ENCODE measurements at regions of chr1 and their contacts with region 1.

Region 1: GRCh38 chr1:193338194-193338593 is 151.8 kb upstream of the B3GALT2 start:
- DNase-seq: peak; percentile 65
- ATAC-seq: peak; percentile 90
- H3K4me3 ChIP-seq: no peak overlapping the region
- H3K27ac ChIP-seq: peak overlapping the region; percentile 46
- H3K4me1 ChIP-seq: peaks cover 11% of the 10 kb centered on the region
- H3K27me3 ChIP-seq: no peaks in the 10 kb centered on the region
- CTCF ChIP-seq: peak; percentile 52; the same call in 1 of the 2 replicates

Region 2: DNA sequence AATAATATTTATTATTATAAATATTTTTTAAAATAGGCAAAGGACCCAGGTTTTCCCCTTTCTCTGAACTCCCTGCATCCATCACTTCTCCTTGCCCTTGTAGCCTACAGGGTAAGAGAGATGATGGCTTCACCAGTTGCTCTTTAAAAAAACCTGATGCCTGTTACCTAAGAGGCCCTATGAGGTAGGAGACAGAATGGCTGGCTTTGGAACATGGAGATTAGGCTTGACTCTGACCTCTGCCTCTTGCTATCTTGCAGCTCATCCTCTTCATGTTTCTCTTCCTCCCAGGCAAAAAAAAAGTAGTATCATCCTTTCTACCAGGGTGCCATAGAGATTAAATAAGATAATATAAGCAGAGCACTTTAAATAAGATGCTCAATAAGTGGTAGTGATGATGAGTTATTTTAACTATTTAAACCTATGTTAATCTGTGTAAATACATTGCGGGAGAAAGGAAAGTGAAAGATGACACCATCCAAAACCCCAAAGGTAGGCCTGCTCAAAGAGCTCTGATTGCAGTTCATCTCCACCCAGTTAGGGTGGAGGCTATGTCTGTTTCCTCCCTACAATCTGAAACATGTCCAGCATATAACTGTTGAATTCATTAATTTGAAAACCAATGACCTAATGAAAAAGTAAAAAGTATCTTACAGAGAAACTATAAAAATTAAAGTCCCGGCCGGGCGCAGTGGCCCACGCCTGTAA is 477.6 kb before region 1 on chr1:
- CTCF ChIA-PET with region 1: no interaction called
- POLR2A ChIA-PET with region 1: no interaction called
- intact Hi-C with region 1: no loop called
- DNase-seq: peak; percentile 36
- ATAC-seq: peak; percentile 43
- H3K4me3 ChIP-seq: no peak overlapping the region
- H3K27ac ChIP-seq: peak overlapping the region; percentile 98
- H3K4me1 ChIP-seq: peaks cover 27% of the 10 kb centered on the region
- H3K27me3 ChIP-seq: no peaks in the 10 kb centered on the region
- CTCF ChIP-seq: no peak

Region 3: DNA sequence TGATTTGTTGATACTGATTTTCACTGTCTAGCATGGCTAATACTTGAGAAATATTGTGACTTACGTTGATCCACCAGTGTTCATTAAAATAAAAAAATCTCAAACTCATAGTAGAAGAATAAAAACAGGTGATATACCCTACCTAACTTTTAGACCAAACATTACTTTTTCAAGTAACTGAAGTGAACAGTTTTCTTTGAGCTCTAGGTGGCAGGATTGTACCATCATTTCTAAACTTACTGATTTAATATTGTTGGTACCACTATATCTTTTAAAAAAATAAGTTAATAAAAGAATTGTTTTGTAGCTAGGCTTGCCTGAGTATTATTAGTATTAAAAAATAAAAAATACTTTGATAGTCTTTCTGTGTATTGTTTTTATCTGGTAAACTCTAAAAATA is 194.9 kb before region 1 on chr1:
- CTCF ChIA-PET with region 1: no interaction called
- POLR2A ChIA-PET with region 1: no interaction called
- intact Hi-C with region 1: loop called (anchors 5 kb)
- DNase-seq: peak; percentile 29
- ATAC-seq: no peak
- H3K4me3 ChIP-seq: no peak overlapping the region
- H3K27ac ChIP-seq: no peak overlapping the region
- H3K4me1 ChIP-seq: no peaks in the 10 kb centered on the region
- H3K27me3 ChIP-seq: no peaks in the 10 kb centered on the region
- CTCF ChIP-seq: peak; percentile 46

Region 4: DNA sequence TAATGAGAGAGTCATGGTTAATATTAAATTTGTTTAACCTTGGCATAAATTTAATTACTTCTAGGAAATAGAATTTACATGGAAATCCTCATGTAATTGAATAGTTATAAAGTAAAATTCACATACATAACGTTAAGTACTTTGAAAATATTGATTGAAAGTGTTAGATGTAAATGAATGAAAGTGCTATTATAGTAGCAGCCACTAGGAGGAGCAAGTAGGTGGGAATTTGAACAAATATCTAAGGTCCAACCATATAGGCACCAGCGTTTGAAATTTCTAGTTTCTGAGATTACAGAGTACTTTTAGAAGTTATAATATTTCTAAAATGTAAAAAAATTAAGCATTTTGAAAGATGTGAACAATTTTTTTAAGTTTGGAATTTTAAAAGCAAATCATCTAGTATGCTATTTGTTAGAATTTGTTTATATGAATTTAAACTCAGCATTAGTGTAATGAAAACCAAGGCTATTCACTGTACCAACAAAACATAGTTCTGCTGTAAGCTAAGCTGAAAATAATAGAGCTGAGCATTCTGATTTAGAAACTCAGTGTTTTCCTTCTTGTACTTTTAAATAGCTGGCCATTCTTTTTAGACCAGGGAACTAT is 155.1 kb before region 1 on chr1:
- CTCF ChIA-PET with region 1: no interaction called
- POLR2A ChIA-PET with region 1: no interaction called
- intact Hi-C with region 1: loop called (anchors 1 kb)
- DNase-seq: peak; percentile 69
- ATAC-seq: peak; percentile 48; the same call in 1 of the 2 replicates
- H3K4me3 ChIP-seq: no peak overlapping the region
- H3K27ac ChIP-seq: no peak overlapping the region
- H3K4me1 ChIP-seq: no peaks in the 10 kb centered on the region
- H3K27me3 ChIP-seq: no peaks in the 10 kb centered on the region
- CTCF ChIP-seq: peak; percentile 70

Region 5: GRCh38 chr1:193256019-193256418 is 82.2 kb before region 1 on chr1:
- CTCF ChIA-PET with region 1: no interaction called
- POLR2A ChIA-PET with region 1: no interaction called
- intact Hi-C with region 1: loop called (anchors 5 kb)
- DNase-seq: no peak
- ATAC-seq: no peak
- H3K4me3 ChIP-seq: no peak overlapping the region
- H3K27ac ChIP-seq: no peak overlapping the region
- H3K4me1 ChIP-seq: no peaks in the 10 kb centered on the region
- H3K27me3 ChIP-seq: no peaks in the 10 kb centered on the region
- CTCF ChIP-seq: no peak

Region 6: GRCh38 chr1:193322223-193322622 is 16.0 kb before region 1 on chr1:
- CTCF ChIA-PET with region 1: no interaction called
- POLR2A ChIA-PET with region 1: no interaction called
- intact Hi-C with region 1: no loop called
- DNase-seq: peak; percentile 76
- ATAC-seq: peak; percentile 93
- H3K4me3 ChIP-seq: no peak overlapping the region
- H3K27ac ChIP-seq: no peak overlapping the region
- H3K4me1 ChIP-seq: peaks cover 13% of the 10 kb centered on the region
- H3K27me3 ChIP-seq: no peaks in the 10 kb centered on the region
- CTCF ChIP-seq: no peak

Region 7: DNA sequence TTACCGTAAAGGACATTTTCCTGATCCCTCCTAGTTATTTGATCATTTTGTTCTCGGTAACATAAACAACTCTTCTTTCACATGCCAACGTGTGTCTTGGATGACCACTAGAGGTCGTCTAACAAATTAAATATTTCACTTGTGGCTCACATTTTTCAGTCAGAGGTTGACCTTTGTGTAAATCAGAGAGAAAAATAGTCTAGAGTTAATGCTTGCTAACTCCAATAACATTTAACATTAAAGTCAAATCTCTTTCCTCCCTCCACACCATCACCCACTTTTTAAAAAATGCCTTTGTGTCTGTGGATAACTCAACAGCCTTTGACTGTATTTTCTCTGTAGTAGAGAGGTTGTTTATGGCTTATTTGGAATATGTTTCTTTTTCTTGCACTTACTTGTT is 68.7 kb after region 1 on chr1:
- CTCF ChIA-PET with region 1: no interaction called
- POLR2A ChIA-PET with region 1: no interaction called
- intact Hi-C with region 1: loop called (anchors 5 kb)
- DNase-seq: peak; percentile 56
- ATAC-seq: peak; percentile 42; the same call in 1 of the 2 replicates
- H3K4me3 ChIP-seq: no peak overlapping the region
- H3K27ac ChIP-seq: no peak overlapping the region
- H3K4me1 ChIP-seq: no peaks in the 10 kb centered on the region
- H3K27me3 ChIP-seq: no peaks in the 10 kb centered on the region
- CTCF ChIP-seq: peak; percentile 74